OCI-LY7 (cell line): ENCODE measurements at regions of chr18 and their contacts with region 1.

Region 1: GRCh38 chr18:26190506-26190905 is 35.7 kb upstream of the TAF4B start:
- DNase-seq: peak; percentile 94
- H3K4me3 ChIP-seq: peak overlapping the region; percentile 56
- H3K27ac ChIP-seq: peak overlapping the region; percentile 99
- H3K4me1 ChIP-seq: peaks cover 55% of the 10 kb centered on the region
- CTCF ChIP-seq: no peak

Region 2: DNA sequence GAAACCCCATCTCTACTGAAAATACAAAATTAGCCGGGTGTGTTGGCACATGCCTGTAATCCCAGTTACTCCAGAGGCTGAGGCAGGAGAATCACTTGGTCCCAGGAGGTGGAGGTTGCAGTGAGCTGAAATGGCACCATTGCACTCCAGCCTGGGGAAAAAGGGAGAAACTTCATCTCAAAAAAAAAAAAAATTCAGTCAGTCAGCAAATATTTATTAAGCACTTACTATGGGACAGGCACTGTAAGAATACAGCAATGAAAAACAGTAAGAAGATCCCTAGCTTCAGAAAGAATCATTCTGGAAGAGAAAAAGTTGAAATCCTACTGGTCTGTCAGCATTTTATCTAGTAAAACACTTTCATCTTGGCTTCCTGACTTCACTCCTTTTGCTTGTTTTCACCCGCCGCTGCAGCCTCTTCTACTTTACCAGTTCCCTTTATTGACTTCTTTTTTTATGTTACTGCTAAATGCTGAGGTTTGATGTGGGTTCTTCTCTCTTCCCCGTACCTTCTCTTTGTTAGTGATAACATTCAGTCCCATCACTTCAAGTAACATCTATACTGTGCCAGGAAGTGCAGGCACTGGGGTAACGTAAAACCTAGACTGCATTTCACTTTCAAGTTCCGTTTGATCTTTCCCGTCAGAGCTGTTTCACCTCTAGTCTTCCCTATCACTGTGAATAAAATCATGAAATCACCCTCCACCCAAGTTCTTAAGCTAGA is 24.9 kb after region 1 on chr18:
- CTCF ChIA-PET with region 1: interaction called, 3 read pairs
- POLR2A ChIA-PET with region 1: interaction called, 6 read pairs
- intact Hi-C with region 1: loop called (anchors 2 kb)
- DNase-seq: peak; percentile 83
- H3K4me3 ChIP-seq: peak overlapping the region; percentile 66
- H3K27ac ChIP-seq: peak overlapping the region; percentile 93
- H3K4me1 ChIP-seq: peaks cover 45% of the 10 kb centered on the region
- CTCF ChIP-seq: no peak

Region 3: DNA sequence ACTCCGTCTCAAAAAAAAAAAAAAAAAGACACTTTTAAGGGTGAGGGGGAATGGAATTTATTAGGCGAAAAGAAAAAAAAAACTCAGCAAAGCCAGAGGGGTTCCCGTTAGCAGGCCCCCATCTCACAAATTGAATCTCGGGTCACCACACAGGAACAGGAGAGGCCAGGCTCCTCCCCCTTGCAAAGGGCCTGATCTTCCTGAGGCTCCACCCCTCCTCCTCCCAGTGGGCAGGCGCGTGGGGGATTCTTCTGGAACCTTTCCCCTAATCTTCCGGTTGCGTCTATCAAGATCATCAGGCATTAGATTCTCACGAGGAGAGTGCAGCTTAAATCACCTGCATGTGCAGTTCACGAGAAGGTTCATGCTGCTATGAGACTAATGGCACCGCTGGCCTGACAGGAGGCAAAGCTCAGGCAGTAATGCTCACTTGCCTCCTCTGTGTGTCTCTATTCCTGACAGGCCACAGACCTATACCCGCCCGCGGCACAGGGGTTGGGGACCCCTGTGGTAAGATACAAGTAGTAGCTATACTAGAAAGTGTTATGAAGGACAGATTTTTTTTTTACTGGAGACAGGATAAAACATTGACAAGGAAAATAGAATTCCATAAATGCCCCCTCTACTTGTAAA is 81.5 kb after region 1 on chr18:
- CTCF ChIA-PET with region 1: no interaction called
- POLR2A ChIA-PET with region 1: no interaction called
- intact Hi-C with region 1: no loop called
- DNase-seq: no peak
- H3K4me3 ChIP-seq: no peak overlapping the region
- H3K27ac ChIP-seq: no peak overlapping the region
- H3K4me1 ChIP-seq: peaks cover 27% of the 10 kb centered on the region
- CTCF ChIP-seq: no peak